Breast epithelium (tissue), 4 donors: ENCODE measurements at regions of chr1 and their contacts with region 1.

Region 1: DNA sequence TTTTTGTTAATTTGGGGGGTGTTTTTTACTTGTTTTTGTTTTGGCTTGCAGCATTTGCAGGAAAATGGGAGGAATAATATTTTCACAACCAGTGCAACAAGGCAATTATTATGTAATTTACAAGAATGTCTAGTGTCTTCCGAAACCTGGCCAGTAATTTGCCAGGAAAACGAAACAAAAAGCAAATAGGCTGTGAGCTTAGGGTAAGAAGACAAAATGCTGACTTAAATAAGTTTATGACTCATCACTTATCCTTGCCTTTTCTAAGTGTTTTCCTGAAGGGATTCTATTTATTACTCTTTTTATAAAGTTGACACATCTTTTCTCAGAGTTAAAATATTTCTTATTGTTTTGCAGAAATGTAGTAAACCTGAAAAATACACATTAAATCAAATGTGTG is 49.8 kb downstream of the KCNT2 start:
- DNase-seq: no peak
- H3K4me3 ChIP-seq: peak overlapping the region; percentile 35 to 39 (median 35)
- H3K27ac ChIP-seq: no peak overlapping the region
- H3K4me1 ChIP-seq: no peaks in the 10 kb centered on the region
- H3K27me3 ChIP-seq: no peaks in the 10 kb centered on the region
- CTCF ChIP-seq: no peak
- POLR2A ChIP-seq: no peak

Region 2: DNA sequence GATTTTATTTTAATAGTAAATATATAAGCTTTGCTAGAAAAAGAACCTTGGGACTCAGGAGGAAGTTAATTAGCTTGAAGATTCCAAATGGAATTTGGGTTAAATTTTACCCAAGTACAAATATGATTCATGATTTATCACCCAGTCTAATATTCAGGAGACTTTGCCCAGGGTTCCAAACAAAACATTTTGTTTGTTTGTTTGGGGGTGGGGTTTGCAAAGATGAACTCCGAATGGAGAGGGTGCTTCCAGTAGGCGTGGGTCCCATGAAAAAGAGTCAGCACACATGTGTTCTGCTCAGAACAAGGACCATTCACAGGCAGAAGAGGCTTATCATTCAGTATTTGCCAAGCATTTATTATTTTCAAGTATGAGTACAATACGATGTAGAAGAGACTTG is 26.3 kb after region 1 on chr1:
- intact Hi-C with region 1: no loop called
- DNase-seq: no peak
- H3K4me3 ChIP-seq: no peak overlapping the region
- H3K27ac ChIP-seq: no peak overlapping the region
- H3K4me1 ChIP-seq: no peaks in the 10 kb centered on the region
- H3K27me3 ChIP-seq: no peaks in the 10 kb centered on the region
- CTCF ChIP-seq: no peak
- POLR2A ChIP-seq: no peak

Region 3: DNA sequence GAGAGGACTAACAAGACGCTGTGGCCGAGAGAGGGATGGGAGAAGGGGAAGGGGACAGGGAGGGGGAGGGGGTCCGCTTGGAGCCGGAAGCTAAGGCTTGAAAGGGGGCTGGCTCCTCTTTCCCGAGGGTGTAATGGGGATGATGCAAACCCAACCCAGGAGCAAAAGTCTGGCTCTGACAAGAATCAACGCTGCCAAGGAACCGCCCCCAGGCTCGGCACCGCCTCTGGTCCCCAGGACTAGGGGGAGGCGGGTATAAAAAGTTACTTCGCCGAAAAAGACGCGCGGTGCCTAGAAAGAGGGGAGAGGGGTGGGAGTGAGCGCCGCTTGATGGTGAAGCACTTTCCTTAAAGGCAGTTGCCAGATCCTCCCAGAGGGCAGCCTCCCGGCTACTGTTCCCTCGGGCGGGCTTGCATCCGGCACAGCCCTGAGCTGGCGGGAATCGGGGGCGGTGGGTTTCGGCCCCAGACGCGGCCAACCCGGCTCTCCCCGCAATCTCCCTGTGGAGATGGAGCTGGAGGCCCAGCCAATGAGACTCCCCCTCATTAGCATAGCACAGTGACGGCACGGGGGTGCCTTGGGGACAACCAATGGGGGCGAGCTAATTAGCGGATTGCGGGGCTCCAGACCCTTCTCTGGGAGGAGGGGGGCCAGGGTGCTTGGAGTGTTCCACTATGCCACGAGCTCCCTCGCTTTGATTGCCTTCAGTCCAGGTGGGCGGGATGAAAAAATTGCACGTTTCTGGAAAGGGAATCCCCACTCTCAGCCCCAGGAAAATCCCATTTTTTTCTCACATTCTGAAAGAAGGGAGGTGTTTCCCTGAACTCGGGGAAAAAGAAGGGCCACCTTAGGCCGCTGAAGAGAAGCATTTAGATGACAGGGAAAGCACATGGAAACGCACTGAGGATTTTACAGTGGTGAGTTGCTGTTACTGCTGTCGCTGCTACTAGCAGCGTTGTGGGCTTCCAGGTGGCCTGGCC is 50.3 kb after region 1 on chr1 and contains the start of gene KCNT2:
- intact Hi-C with region 1: no loop called
- DNase-seq: no peak
- H3K4me3 ChIP-seq: peak within 1 kb of the TSS; percentile 53 to 74 (median 59)
- H3K27ac ChIP-seq: peak within 1 kb of the TSS; percentile 46 to 89
- H3K4me1 ChIP-seq: no peaks in the 10 kb centered on the region
- H3K27me3 ChIP-seq: peaks cover 0 to 7% of the 10 kb centered on the region in 2 donors
- CTCF ChIP-seq: no peak
- POLR2A ChIP-seq: no peak
- total RNA-seq, gene KCNT2: 2.6 to 3.7 (median 3.0) TPM

Region 4: GRCh38 chr1:197994907-197995407 is 1436.5 kb after region 1 on chr1:
- intact Hi-C with region 1: loop called (anchors 10 kb)
- DNase-seq: no peak
- H3K4me3 ChIP-seq: no peak overlapping the region
- H3K27ac ChIP-seq: no peak overlapping the region
- H3K4me1 ChIP-seq: no peaks in the 10 kb centered on the region
- H3K27me3 ChIP-seq: no peaks in the 10 kb centered on the region
- CTCF ChIP-seq: no peak
- POLR2A ChIP-seq: no peak